IMR-90 (cell line): ENCODE measurements at regions of chr2 and their contacts with region 1.

Region 1: GRCh38 chr2:181715033-181715630 is 34.8 kb upstream of the NEUROD1 start:
- DNase-seq: peak; percentile 82
- ATAC-seq: peak; percentile 92
- H3K4me3 ChIP-seq: no peak overlapping the region
- H3K27ac ChIP-seq: no peak overlapping the region
- H3K4me1 ChIP-seq: no peaks in the 10 kb centered on the region
- H3K27me3 ChIP-seq: no peaks in the 10 kb centered on the region; the same call in none of the 2 replicates
- CTCF ChIP-seq: peak; percentile 79
- POLR2A ChIP-seq: no peak
- RAD21 ChIP-seq: peak; percentile 90

Region 2: GRCh38 chr2:181077128-181077709 is 637.9 kb before region 1 on chr2:
- CTCF ChIA-PET with region 1: no interaction called
- POLR2A ChIA-PET with region 1: no interaction called
- dilution Hi-C with region 1: no loop called
- in situ Hi-C with region 1: no loop called
- intact Hi-C with region 1: loop called (anchors 1 kb)
- DNase-seq: peak; percentile 62
- ATAC-seq: peak; percentile 66
- H3K4me3 ChIP-seq: no peak overlapping the region
- H3K27ac ChIP-seq: no peak overlapping the region
- H3K4me1 ChIP-seq: peaks cover 3% of the 10 kb centered on the region
- H3K27me3 ChIP-seq: no peaks in the 10 kb centered on the region
- CTCF ChIP-seq: peak; percentile 66
- POLR2A ChIP-seq: no peak
- RAD21 ChIP-seq: peak; percentile 61

Region 3: GRCh38 chr2:181466661-181467576 is 248.2 kb before region 1 on chr2:
- CTCF ChIA-PET with region 1: interaction called, 5 read pairs
- POLR2A ChIA-PET with region 1: no interaction called
- dilution Hi-C with region 1: no loop called
- in situ Hi-C with region 1: no loop called
- intact Hi-C with region 1: loop called (anchors 5 kb)
- DNase-seq: peak; percentile 63
- ATAC-seq: peak; percentile 63; the same call in 1 of the 2 replicates
- H3K4me3 ChIP-seq: no peak overlapping the region
- H3K27ac ChIP-seq: no peak overlapping the region
- H3K4me1 ChIP-seq: no peaks in the 10 kb centered on the region
- H3K27me3 ChIP-seq: no peaks in the 10 kb centered on the region
- CTCF ChIP-seq: peak; percentile 75
- POLR2A ChIP-seq: no peak
- RAD21 ChIP-seq: peak; percentile 63

Region 4: GRCh38 chr2:181573140-181573736 is 141.9 kb before region 1 on chr2:
- CTCF ChIA-PET with region 1: interaction called, 13 read pairs
- POLR2A ChIA-PET with region 1: no interaction called
- dilution Hi-C with region 1: no loop called
- in situ Hi-C with region 1: loop called (anchors 5 kb)
- intact Hi-C with region 1: loop called (anchors 1 kb)
- DNase-seq: peak; percentile 50
- ATAC-seq: peak; percentile 54; the same call in 1 of the 2 replicates
- H3K4me3 ChIP-seq: no peak overlapping the region
- H3K27ac ChIP-seq: no peak overlapping the region
- H3K4me1 ChIP-seq: no peaks in the 10 kb centered on the region
- H3K27me3 ChIP-seq: peaks cover 9% of the 10 kb centered on the region
- CTCF ChIP-seq: peak; percentile 55
- POLR2A ChIP-seq: no peak
- RAD21 ChIP-seq: peak; percentile 47

Region 5: GRCh38 chr2:181746844-181747243 is 31.7 kb after region 1 on chr2:
- CTCF ChIA-PET with region 1: no interaction called
- POLR2A ChIA-PET with region 1: no interaction called
- dilution Hi-C with region 1: no loop called
- in situ Hi-C with region 1: no loop called
- intact Hi-C with region 1: no loop called
- DNase-seq: no peak
- ATAC-seq: no peak
- H3K4me3 ChIP-seq: no peak overlapping the region
- H3K27ac ChIP-seq: no peak overlapping the region
- H3K4me1 ChIP-seq: no peaks in the 10 kb centered on the region; the same call in 1 of the 2 replicates
- H3K27me3 ChIP-seq: no peaks in the 10 kb centered on the region
- CTCF ChIP-seq: no peak
- POLR2A ChIP-seq: no peak
- RAD21 ChIP-seq: no peak